ENCODE measurements at regions of chr3 and their contacts with region 1.

Region 1: DNA sequence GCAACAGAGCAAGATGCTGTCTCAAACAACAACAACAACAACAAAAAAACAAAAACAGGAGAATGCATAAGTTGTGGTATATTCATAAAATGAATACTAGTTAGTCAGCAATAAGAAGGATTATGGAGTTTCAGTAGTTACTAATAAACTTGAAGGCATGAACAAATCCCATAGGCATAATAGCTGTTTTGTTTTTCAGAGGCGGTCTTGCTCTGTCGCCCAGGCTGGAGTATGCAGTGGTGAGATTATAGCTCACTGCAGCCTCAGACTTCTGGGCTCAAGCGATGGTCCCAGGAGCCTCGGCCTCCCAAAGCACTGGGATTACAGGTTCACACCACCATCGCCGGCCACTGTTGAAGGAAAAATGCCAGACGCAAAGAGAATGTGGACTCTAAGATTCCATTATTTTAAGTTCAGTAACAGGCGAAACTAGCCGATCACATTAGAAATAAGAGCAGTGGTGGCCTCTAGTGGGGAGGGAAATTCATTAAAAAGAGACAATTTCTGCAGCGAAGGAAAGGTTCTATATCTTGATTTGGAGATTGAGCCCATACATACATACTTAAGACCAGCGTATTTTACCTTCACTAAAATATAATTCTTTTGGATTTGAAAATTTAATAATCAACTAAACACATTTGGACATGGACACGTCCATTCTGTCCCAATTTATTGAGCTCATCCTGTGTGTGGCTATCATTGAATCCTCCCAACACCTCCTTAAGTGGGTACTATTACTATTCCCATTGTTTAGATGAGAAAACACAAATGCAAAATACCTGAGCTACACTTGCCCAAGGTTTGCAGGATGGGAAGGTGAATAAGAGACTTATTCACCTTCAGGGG is 27.4 kb upstream of the HDAC11 start:
- DNase-seq: peak; percentile 56
- ATAC-seq: no peak
- H3K4me3 Mint-ChIP-seq: peak overlapping the region; percentile 70
- H3K27ac Mint-ChIP-seq: peak overlapping the region; percentile 89
- H3K4me1 Mint-ChIP-seq: peaks cover 14% of the 10 kb centered on the region
- H3K27me3 Mint-ChIP-seq: no peaks in the 10 kb centered on the region

Region 2: DNA sequence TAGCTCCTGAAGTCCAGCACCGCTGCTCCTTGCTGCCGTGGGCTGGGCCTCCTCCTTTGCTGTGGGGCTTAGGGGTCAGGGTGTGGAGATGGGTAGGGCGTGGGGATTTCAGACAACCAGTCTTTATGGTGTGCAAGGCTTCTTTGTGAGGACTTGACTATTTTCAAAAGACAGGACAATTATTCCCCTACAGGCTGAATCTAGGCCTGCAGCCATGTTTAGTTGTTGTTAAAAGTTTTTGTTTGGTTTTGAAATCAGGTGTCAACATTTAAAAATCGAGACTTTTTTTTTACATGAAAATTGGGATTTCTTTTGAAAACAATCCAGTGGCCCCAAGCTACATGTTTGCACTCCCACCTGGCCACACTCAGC is 621.9 kb before region 1 on chr3:
- CTCF ChIA-PET with region 1: no interaction called
- POLR2A ChIA-PET with region 1: no interaction called
- intact Hi-C with region 1: loop called in 1 of 2 experiments (anchors 10 kb)
- DNase-seq: no peak
- ATAC-seq: no peak
- H3K4me3 Mint-ChIP-seq: no peak overlapping the region
- H3K27ac Mint-ChIP-seq: no peak overlapping the region
- H3K4me1 Mint-ChIP-seq: no peaks in the 10 kb centered on the region
- H3K27me3 Mint-ChIP-seq: no peaks in the 10 kb centered on the region

Region 3: DNA sequence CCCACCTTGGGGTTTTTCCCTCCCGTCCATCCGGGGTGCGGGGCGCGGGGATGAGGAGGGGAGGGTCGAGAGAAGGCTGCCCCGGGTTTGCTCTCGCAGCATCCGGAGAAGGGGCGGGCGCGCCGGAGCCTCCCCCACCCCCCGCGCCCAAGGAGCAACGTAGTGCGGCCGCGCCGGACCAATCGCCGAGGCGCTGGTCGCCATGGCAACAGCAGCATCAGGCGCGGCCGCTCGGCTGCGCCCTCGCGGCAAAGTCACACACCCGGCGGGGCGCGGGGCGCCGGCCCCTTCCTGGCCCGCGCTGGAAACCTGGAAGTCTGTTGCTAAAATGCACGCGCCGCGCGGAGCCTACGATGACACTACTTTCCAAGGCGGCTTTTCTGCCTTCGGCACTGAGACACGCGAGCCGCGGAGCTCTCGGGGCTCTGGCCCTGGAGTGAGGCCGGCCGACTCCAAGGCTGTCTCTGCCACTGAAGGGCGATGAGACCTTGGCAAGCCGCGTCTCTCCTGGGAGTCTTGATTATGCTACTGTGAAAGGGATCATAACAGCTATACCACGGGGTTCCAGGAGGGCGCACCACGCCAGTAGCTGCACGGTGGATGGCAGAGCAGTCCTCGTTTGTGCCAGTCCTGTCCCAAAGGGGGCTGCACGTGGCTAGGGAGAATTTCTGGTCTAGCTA is 379.2 kb before region 1 on chr3 and contains the start of gene IQSEC1:
- CTCF ChIA-PET with region 1: no interaction called
- POLR2A ChIA-PET with region 1: no interaction called
- intact Hi-C with region 1: loop called in 1 of 2 experiments (anchors 1 kb)
- DNase-seq: peak; percentile 89
- ATAC-seq: peak; percentile 68
- H3K4me3 Mint-ChIP-seq: peak within 1 kb of the TSS; percentile 80
- H3K27ac Mint-ChIP-seq: peak within 1 kb of the TSS; percentile 51
- H3K4me1 Mint-ChIP-seq: peaks cover 34% of the 10 kb centered on the region
- H3K27me3 Mint-ChIP-seq: peaks cover 21% of the 10 kb centered on the region
- total RNA-seq, gene IQSEC1: 36.8 to 40.4 TPM

Region 4: DNA sequence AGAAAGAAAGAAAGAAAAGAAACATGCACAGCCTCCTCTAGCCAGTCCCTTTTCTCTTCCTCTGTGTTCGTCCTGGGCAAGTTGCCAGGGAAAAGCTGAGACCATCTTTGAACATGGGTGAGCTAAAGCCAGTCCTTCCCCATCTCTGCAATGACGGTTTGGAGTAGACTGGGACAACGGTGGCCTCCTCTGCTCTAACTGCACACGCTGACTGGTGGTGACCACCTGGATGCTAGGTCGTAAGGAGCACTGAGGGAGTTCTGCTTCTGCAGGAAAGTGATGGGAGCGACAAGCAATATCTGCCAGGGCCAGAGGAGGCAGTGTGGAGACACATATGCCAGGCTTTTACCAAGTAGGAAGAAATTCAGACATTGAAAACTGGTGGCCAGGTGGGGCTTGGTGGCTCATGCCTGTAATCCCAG is 144.3 kb before region 1 on chr3:
- CTCF ChIA-PET with region 1: no interaction called
- POLR2A ChIA-PET with region 1: no interaction called
- intact Hi-C with region 1: loop called in 1 of 2 experiments (anchors 2 kb)
- DNase-seq: peak; percentile 48
- ATAC-seq: peak; percentile 67
- H3K4me3 Mint-ChIP-seq: no peak overlapping the region
- H3K27ac Mint-ChIP-seq: no peak overlapping the region
- H3K4me1 Mint-ChIP-seq: no peaks in the 10 kb centered on the region
- H3K27me3 Mint-ChIP-seq: no peaks in the 10 kb centered on the region

Region 5: DNA sequence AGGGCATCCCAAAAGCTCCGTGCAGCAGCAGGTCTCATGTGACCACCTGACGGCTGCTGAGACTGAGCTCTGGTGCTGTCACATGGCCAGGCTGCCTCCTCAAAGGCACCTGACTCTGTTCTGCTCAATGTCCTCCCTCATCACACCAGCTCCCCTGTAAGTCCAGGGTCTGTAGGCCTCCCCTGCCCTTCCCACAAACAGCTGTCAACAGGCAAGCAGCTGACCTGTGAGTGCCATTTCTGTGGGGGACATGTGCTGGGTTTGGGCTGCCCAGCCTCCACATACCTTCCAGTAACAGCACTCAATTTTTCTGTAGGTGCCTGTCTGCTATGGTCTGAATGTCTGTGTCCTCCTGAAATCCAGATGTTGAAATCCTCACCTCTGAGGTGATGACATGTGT is 43.8 kb before region 1 on chr3:
- CTCF ChIA-PET with region 1: interaction called, 13 read pairs
- POLR2A ChIA-PET with region 1: no interaction called
- intact Hi-C with region 1: loop called in 1 of 2 experiments (anchors 1 kb)
- DNase-seq: no peak
- ATAC-seq: no peak
- H3K4me3 Mint-ChIP-seq: no peak overlapping the region
- H3K27ac Mint-ChIP-seq: no peak overlapping the region
- H3K4me1 Mint-ChIP-seq: peaks cover 33% of the 10 kb centered on the region
- H3K27me3 Mint-ChIP-seq: no peaks in the 10 kb centered on the region

Region 6: GRCh38 chr3:13427662-13428603 is 24.8 kb before region 1 on chr3:
- CTCF ChIA-PET with region 1: interaction called, 15 read pairs
- POLR2A ChIA-PET with region 1: no interaction called
- intact Hi-C with region 1: loop called in 1 of 2 experiments (anchors 1 kb)
- DNase-seq: peak; percentile 40
- ATAC-seq: peak; percentile 85
- H3K4me3 Mint-ChIP-seq: no peak overlapping the region
- H3K27ac Mint-ChIP-seq: peak overlapping the region; percentile 76
- H3K4me1 Mint-ChIP-seq: peaks cover 31% of the 10 kb centered on the region
- H3K27me3 Mint-ChIP-seq: no peaks in the 10 kb centered on the region

Region 7: DNA sequence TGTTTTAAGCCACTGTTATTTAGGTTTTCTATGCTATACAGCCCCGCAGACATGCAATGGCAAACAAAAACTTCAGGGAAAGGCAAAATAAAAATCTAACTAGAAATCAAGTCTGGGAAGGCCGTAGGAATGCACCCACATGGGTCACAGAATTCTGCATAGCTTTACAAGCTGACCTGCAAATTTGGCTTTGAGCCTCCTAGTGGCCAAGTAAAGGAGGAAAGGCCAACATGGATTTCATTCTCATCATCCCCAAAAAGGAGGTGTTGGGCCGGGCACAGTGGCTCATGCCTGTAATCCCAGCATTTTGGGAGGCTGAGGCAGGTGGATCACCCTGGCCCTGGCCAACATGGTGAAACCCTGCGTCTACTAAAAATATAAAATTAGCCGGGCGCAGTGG is 220.5 kb after region 1 on chr3:
- CTCF ChIA-PET with region 1: no interaction called
- POLR2A ChIA-PET with region 1: no interaction called
- intact Hi-C with region 1: no loop called
- DNase-seq: no peak
- ATAC-seq: no peak
- H3K4me3 Mint-ChIP-seq: no peak overlapping the region
- H3K27ac Mint-ChIP-seq: no peak overlapping the region
- H3K4me1 Mint-ChIP-seq: no peaks in the 10 kb centered on the region
- H3K27me3 Mint-ChIP-seq: peaks cover 7% of the 10 kb centered on the region